Endothelial cell of umbilical vein (primary cell): ENCODE measurements at regions of chr6 and their contacts with region 1.

Region 1: GRCh38 chr6:27479319-27480182 is 6.6 kb upstream of the ZNF184 start:
- DNase-seq: peak; percentile 94
- H3K4me3 ChIP-seq: peak overlapping the region; percentile 78 to 93 (median 88)
- H3K27ac ChIP-seq: peak overlapping the region; percentile 82
- H3K4me1 ChIP-seq: peaks cover 7% of the 10 kb centered on the region
- H3K27me3 ChIP-seq: peaks cover 11 to 16% of the 10 kb centered on the region in 2 experiments
- CTCF ChIP-seq: no peak
- POLR2A ChIP-seq: no peak

Region 2: DNA sequence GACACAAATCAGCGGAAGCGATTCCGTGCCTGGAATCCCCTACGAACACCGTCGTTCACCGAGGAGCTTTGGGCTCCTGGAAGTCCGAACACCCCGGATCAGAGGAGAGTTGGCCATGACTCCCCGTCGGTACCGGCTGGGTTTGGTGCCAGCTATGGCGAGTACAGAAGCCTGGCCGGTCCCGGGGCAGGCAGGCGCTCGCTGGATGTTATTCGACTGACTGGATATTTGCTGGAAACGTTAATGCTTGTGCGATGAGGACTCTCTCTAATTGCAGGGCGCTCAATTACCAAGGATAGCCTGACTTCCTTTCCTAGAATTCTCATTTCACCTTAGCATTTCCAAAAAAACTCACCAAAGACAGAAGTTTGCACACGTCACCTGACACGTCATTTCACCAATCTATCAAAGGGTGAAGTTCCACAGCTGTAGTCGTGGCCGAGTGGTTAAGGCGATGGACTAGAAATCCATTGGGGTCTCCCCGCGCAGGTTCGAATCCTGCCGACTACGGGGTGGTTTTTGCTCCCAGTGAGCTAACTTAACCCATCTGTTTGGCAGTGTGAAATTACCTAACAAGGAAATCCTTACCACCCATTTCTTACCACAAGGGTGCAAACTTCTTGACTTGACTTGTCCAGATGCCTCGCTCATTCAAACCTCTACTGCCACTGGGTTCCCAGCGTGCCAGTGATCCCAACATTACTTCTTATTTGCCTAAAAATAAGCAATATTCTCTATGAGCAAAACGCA is 16.0 kb after region 1 on chr6:
- CTCF ChIA-PET with region 1: interaction called, 4 read pairs
- POLR2A ChIA-PET with region 1: no interaction called
- dilution Hi-C with region 1: no loop called
- intact Hi-C with region 1: loop called (anchors 1 kb)
- DNase-seq: peak; percentile 58
- H3K4me3 ChIP-seq: peak overlapping the region; percentile 44 to 84 (median 82)
- H3K27ac ChIP-seq: no peak overlapping the region
- H3K4me1 ChIP-seq: peaks cover 7% of the 10 kb centered on the region
- H3K27me3 ChIP-seq: peaks cover 11 to 23% of the 10 kb centered on the region in 2 experiments
- CTCF ChIP-seq: peak in 1 of 2 donors; percentile 5
- POLR2A ChIP-seq: no peak

Region 3: DNA sequence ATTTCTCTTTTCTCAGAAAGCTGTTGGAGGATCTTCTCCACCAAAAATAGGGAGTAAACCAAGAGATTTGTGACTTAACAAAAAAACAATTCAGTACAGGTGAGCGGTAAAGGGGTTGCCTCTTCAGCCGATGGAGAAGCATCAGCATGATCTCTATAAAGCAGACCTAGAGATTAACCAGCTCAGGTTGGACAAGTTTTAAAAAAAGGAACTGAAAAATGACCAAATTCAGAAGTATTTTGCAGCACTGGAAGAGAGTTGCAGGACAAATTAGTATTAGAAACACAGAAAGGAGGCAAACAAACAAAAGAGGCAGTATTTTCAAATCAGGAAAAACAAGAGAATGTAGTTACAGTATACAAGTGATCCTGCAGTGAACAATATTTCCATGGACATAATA is 33.0 kb after region 1 on chr6:
- CTCF ChIA-PET with region 1: no interaction called
- POLR2A ChIA-PET with region 1: no interaction called
- dilution Hi-C with region 1: no loop called
- intact Hi-C with region 1: no loop called
- DNase-seq: no peak
- H3K4me3 ChIP-seq: no peak overlapping the region
- H3K27ac ChIP-seq: no peak overlapping the region
- H3K4me1 ChIP-seq: no peaks in the 10 kb centered on the region
- H3K27me3 ChIP-seq: peaks cover 33 to 42% of the 10 kb centered on the region in 2 experiments
- CTCF ChIP-seq: no peak
- POLR2A ChIP-seq: no peak